ENCODE measurements at regions of chr12 and their contacts with region 1.

Region 1: DNA sequence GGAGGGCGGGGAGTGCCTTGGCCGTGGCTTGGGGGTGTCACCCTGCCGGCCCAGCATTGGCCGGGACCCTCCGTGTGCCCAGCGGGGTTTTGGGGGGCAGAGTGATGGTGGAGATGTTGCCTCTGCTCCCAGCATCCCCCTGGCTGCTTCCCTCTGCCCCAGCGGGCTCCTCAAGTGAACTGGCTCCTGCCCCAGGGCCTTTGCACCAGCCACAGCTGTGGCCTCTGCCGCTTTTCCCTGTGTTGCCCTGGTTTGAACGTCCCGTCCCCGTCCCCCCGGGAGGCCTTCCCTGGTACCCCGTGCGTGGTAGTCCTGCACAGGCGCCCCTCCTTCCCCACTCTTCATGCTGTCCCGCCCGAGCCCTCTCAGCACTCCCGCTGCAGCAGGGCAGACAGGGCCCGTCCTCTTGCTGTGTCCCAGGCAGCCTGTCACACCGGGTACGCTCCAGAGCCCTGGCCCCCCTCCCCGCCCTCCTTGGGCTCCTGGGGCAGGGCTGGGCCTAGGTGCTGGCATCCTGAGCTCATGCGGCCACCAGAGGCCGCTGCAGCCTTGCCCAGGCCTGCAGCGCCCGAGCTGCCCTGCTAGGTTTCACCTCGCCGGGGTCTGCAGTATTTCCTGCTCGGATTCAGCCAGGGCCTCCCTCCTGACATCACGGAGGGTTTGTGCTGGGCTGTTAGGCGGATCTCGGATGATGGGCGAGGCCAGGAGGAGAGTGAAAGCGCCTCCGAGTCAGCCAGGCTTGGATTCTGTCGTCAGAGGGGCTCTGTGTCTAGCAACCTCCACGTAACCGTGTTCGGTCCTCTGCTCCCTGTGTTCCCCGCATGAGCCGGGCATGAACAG is 9.5 kb downstream of the NOC4L start:
- DNase-seq: peak; percentile 75
- H3K4me3 Mint-ChIP-seq: no peak overlapping the region
- H3K27ac Mint-ChIP-seq: no peak overlapping the region
- H3K4me1 Mint-ChIP-seq: no peaks in the 10 kb centered on the region
- H3K27me3 Mint-ChIP-seq: no peaks in the 10 kb centered on the region

Region 2: DNA sequence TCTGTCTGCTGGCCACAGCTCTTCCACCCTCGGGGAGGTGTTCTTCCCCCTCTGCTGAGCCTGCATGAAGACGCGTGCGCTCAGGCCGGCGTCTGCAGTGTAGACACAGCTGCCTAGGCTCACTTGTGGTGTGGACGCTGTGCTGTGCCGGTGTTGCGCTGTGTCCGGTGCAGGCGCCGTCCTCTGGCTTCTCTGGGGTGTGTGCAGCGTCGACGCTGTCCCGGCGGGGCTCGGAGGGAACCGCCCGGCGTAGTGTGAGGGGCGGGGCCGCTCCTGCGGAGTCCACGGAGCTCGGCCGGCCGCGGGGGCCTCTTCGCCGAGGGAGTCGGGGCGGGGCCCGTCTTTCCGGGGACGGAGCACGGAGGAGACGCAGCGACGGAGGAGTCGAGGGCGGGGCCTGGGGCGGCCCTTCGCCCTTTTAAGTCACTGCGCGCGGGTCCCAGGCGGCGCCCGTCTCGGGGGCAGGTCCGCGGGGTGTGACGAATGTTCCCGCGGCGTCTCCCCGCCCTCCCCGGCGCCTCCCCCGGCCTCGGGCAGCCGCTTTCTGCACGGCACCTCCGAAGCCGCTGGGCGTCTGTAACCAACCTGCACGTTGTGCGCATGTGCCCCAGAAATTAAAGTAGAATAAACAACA is 35.8 kb after region 1 on chr12:
- CTCF ChIA-PET with region 1: interaction called, 5 read pairs
- POLR2A ChIA-PET with region 1: no interaction called
- intact Hi-C with region 1: loop called (anchors 5 kb)
- DNase-seq: peak; percentile 96
- H3K4me3 Mint-ChIP-seq: peak overlapping the region; percentile 93
- H3K27ac Mint-ChIP-seq: peak overlapping the region; percentile 80
- H3K4me1 Mint-ChIP-seq: peaks cover 40% of the 10 kb centered on the region
- H3K27me3 Mint-ChIP-seq: no peaks in the 10 kb centered on the region

Region 3: DNA sequence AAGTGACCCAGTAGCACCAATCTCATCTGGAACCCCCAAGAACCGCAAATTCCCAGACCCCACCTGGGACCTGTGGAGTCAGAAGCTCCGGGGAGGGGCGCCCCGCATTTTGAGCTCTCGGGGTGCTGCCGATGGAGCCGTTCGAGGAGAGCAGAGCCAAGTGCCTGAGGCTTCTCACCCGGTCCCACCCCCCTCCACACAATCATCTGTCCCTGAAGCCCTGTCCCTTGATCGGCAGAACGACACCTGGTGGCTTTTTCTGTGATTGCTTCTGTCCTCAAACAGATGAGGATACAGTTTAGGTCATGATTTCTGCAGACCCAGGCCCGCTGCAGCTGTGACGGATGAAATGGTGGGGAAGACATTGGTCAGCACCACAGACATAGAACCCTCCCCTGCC is 65.2 kb after region 1 on chr12:
- CTCF ChIA-PET with region 1: interaction called, 66 read pairs
- POLR2A ChIA-PET with region 1: no interaction called
- intact Hi-C with region 1: loop called (anchors 1 kb)
- DNase-seq: peak; percentile 49
- H3K4me3 Mint-ChIP-seq: no peak overlapping the region
- H3K27ac Mint-ChIP-seq: no peak overlapping the region
- H3K4me1 Mint-ChIP-seq: peaks cover 4% of the 10 kb centered on the region
- H3K27me3 Mint-ChIP-seq: peaks cover 8% of the 10 kb centered on the region

Region 4: DNA sequence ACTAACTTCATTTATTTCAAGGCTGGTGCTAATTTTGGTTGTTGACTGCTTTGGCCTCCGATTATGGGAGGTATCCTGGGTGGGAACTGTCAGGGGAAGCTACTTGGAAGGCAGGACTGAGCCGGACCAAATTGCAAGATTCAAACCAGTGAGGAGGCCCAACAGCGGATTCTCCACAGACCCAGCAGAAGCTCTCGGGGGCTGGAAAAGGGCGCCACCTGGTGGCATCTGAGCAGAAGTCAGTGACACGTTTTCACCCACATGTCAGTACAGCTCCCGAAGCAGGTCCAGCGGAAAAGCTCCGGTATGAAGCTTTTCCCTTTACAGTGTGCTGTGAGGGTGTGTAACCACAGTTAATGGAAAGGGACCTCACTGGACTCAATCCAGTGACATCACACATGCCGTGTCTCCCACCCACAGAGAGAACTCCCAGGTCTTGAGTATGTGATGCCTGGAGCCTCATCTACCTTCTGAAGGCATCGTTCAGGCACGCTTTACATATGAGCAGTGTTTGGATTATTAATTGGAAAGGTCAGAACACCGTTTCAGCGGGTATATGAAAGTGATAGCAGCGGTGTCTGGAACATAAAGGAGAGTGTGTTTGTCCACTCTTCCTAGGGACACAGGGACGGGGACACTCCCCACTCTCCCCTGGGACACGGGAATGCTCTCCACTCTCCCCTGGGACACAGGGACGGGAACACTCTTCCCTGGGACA is 461.3 kb after region 1 on chr12:
- CTCF ChIA-PET with region 1: interaction called, 7 read pairs
- POLR2A ChIA-PET with region 1: no interaction called
- intact Hi-C with region 1: loop called (anchors 10 kb)
- DNase-seq: peak; percentile 86
- H3K4me3 Mint-ChIP-seq: no peak overlapping the region
- H3K27ac Mint-ChIP-seq: no peak overlapping the region
- H3K4me1 Mint-ChIP-seq: peaks cover 14% of the 10 kb centered on the region
- H3K27me3 Mint-ChIP-seq: peaks cover 35% of the 10 kb centered on the region

Region 5: GRCh38 chr12:132940071-132940719 is 786.5 kb after region 1 on chr12:
- CTCF ChIA-PET with region 1: no interaction called
- POLR2A ChIA-PET with region 1: no interaction called
- intact Hi-C with region 1: no loop called
- DNase-seq: no peak
- H3K4me3 Mint-ChIP-seq: no peak overlapping the region
- H3K27ac Mint-ChIP-seq: no peak overlapping the region
- H3K4me1 Mint-ChIP-seq: no peaks in the 10 kb centered on the region
- H3K27me3 Mint-ChIP-seq: no peaks in the 10 kb centered on the region

Measured in activated CD4-positive, alpha-beta memory T cell treated with anti-CD3 and anti-CD28 coated beads for 36 hours (primary cell).